ENCODE measurements at regions of chr17 and their contacts with region 1.

Region 1: DNA sequence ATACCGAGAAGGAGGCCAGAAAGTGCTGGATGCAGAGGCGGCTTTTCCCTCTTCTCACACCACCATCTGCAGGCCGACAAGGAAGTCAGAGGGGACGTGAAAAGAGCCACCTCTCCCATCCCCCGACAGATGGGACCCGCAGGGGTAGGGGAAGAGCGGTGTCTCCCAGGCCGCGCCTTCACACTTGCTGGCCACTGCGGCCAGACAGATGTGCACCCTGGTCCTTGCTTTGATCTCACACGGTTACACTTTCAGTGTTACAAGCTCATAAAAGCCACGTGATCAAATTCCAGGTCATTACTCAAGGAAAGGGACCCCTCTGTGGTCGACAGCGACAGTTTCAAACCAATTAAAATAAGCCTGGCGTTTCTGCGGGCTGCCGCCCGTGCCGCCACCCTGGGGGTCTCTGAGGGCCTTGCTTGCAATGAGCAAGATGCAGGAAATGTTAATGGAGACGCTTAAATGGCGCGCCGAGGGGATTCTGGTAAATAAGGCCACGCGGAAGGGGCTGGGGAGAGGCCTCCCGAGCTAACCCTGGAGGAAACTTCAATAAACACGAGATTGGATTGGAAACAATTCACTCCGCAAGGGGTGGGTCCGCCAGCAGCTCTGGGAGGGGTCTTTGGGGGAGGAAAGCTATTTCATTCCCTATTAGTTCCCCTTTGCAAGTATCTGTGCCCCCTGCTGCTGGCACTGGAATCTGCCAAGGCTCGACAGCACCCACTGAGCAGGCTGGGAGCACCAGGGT is 240.9 kb downstream of the ENGASE start:
- DNase-seq: no peak
- H3K4me3 ChIP-seq: no peak overlapping the region
- H3K27ac ChIP-seq: no peak overlapping the region
- H3K4me1 ChIP-seq: no peaks in the 10 kb centered on the region
- H3K27me3 ChIP-seq: peaks cover 0 to 76% of the 10 kb centered on the region in 2 donors
- CTCF ChIP-seq: no peak
- POLR2A ChIP-seq: no peak

Region 2: DNA sequence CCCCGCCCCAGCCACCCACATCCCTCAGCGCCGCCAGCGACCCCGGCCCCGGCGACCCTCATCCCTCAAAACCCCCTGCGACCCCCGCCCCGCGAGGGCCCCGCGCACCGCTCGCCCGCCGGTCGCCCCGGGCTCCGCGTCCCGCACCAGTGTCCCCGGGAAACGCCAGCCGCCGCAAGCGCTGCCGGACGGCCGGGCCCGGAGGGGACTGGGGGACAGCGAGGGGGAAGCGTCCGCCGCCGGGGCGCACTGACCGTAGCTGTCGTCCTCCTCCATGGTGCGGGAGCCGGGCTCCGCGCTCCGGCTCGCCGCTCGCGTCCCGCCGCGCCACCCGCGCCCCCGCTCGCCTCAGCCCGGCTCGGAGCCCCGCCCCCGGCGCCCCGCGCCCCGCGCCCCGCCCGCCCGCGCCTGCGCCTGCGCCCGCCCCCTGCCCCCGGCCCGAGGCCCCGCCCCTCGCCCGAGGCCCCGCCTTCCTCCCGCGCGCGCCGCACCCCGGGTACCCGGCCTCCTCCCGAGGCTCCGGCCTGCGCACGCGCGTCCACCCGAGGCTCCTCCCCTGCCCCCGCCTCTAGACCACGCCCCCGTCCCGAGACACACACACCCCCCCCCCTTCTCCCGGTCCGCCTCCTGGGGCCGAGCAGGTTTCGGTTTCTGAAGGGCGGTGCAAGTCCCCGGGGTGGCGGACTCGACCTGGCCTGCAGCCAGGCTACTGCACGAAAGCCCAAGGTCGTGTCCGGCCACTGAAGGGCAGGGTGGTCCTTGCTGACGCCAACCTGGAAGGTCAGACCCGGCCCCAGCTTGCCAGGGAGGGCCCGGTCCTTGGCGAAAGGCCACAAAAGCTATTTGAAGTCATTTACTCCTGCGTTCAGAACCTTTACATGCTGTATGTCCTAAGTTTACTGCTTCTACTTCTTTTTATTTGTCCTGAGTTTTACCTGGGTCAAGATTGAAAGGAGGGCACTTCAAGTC is 533.3 kb before region 1 on chr17 and contains the start of gene CYTH1:
- intact Hi-C with region 1: no loop called
- DNase-seq: peak; percentile 96 to 98
- H3K4me3 ChIP-seq: peak within 1 kb of the TSS; percentile 70 to 98 (median 92)
- H3K27ac ChIP-seq: peak within 1 kb of the TSS; percentile 94 to 96
- H3K4me1 ChIP-seq: no peaks in the 10 kb centered on the region
- H3K27me3 ChIP-seq: no peaks in the 10 kb centered on the region
- CTCF ChIP-seq: no peak
- POLR2A ChIP-seq: peak; percentile 32
- total RNA-seq, gene CYTH1: 49.5 to 64.8 (median 50.7) TPM

Region 3: DNA sequence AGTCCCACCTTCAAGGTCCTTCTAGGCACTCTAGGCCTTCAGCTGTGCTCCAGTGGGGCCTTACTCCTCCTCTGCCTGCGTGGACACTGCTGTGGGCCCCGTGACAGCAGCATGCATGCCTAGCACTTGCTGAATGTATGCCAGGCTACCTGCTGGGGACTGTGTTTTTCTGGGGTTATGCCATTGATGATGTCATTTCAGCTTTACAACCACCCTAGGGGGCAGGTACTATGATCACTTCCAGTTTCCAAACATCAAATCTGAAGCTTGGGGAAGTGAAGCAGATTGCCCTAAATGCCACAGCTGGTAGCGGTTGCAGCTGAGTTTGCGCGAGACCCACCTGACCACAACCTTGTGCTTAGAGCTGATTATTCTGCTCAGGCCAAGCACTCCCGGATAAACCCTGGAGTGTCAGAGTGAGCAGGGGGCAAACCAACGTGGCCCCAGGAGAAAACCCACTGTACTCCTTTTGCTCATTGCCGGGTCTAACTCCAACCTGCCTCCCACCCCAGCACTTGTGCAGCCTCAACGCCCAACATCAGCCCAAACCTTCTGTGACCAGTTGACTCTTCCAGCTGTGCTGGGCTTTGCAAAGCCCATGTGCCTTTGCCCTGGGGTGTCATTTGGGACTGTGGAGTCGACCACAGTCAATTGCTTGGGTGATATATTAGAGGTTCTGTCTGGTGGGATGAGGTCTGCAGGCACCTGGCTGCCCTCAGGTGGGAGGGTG is 72.5 kb before region 1 on chr17:
- intact Hi-C with region 1: loop called (anchors 2 kb)
- DNase-seq: no peak
- H3K4me3 ChIP-seq: no peak overlapping the region
- H3K27ac ChIP-seq: no peak overlapping the region
- H3K4me1 ChIP-seq: no peaks in the 10 kb centered on the region
- H3K27me3 ChIP-seq: peaks cover 0 to 46% of the 10 kb centered on the region in 2 donors
- CTCF ChIP-seq: no peak
- POLR2A ChIP-seq: no peak

Region 4: DNA sequence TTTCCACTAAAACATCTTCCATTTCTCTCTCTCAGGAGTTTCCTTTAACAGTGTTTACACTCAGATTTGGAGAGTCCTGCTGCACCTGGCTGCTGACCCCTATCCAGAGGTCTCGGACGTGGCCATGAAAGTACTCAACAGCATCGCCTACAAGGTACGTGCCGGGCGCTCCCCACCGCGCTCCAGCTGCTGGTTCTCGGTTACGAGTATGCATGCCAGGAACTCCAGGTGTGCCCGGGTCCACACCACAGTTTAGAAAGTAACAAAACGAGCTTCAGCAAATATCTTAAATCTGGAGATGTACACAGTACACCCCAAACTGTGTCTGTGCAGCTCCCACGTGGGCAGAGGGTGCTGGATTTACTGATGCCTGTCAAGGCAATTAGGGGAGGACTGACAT is 1593.2 kb after region 1 on chr17:
- intact Hi-C with region 1: no loop called
- DNase-seq: no peak
- H3K4me3 ChIP-seq: no peak overlapping the region
- H3K27ac ChIP-seq: no peak overlapping the region
- H3K4me1 ChIP-seq: no peaks in the 10 kb centered on the region
- H3K27me3 ChIP-seq: no peaks in the 10 kb centered on the region
- CTCF ChIP-seq: no peak
- POLR2A ChIP-seq: no peak